ENCODE measurements at regions of chr7 and their contacts with region 1.

Region 1: GRCh38 chr7:1646957-1647891 is 22.9 kb upstream of the ELFN1 start:
- DNase-seq: peak; percentile 55 to 81 (median 79)
- ATAC-seq: peak; percentile 25 to 34
- H3K4me3 ChIP-seq: no peak overlapping the region
- H3K27ac ChIP-seq: peak overlapping the region; percentile 92
- H3K4me1 ChIP-seq: peaks cover 7% of the 10 kb centered on the region
- H3K27me3 ChIP-seq: no peaks in the 10 kb centered on the region

Region 2: DNA sequence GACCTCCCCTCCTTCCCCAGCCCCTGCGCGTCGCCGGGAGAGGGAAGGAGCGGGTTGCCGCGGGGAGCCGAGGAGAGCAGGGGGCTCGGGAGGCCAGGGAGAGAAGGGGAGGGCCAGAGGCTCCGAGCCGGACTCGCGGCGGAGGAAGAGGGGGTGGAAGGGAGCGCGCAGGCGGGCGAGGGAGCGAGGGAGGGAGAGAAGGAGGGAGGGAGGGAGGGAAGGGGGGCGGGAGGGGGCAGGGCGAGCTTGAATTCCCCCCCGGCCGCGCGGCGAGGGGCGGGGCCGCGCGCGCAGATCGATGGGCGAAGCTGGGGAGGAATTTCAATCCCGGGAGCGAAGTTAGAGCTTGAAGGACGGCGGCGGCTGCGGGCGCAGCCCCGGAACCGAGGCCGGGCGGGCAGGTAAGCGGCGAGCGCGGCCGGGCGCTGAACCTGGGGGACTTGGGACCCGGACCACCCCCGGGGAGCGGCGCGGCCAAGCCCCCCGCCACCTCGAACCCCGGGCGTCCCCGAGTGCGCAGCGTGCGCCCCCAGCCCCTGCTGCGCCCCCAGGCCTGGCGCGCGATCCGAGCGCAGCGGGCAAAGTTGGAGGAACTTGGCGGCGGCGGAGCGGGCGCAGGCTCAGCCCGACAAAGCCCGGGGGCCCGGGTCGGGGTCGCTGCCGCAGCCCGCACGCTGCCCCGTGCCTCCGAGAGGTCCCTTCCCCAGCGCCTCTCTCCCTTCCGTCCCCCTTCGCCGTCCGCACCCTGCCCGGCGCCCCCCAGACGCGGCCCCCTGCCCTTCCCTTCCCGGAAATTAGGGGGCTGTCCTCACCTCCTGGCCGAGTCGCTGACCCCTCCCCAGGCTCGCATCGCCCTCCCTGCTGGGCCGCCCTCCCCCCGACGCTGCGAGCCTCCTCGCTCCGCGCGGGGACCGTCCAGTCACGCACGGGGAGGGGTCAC is 23.0 kb after region 1 on chr7 and contains the start of gene ELFN1:
- intact Hi-C with region 1: no loop called
- DNase-seq: peak; percentile 35 to 80 (median 60)
- ATAC-seq: peak; percentile 5 to 22
- H3K4me3 ChIP-seq: peak within 1 kb of the TSS; percentile 55
- H3K27ac ChIP-seq: no peak within 1 kb of the TSS
- H3K4me1 ChIP-seq: no peaks in the 10 kb centered on the region
- H3K27me3 ChIP-seq: no peaks in the 10 kb centered on the region
- total RNA-seq, gene ELFN1: 11.8 to 13.7 (median 13.0) TPM

Region 3: DNA sequence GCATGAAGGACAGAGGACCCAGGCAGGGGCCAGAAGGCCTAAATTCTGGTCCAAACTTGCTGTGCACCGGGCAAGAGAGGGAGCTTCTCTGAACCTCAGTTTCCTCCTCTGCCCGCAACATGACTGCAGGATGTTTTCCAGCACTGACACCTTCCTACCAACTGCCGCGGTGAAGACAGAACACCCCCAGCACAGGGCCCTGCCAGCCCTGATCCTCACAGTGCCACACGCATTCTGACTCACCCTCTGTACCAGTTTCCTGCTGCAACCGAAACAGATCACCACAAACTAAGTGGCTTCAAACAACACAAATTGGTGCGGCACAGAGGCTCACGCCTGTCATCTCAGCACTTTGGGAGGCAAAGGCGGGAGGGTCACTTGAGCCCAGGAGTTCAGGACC is 567.4 kb after region 1 on chr7:
- intact Hi-C with region 1: loop called in 1 of 4 experiments (anchors 10 kb)
- DNase-seq: peak in 2 of 3 donors; percentile 31 to 57
- ATAC-seq: peak; percentile 42 to 61
- H3K4me3 ChIP-seq: no peak overlapping the region
- H3K27ac ChIP-seq: peak overlapping the region; percentile 89
- H3K4me1 ChIP-seq: peaks cover 4% of the 10 kb centered on the region
- H3K27me3 ChIP-seq: no peaks in the 10 kb centered on the region